Endothelial cell of umbilical vein (primary cell): ENCODE measurements at regions of chr3 and their contacts with region 1.

Region 1: GRCh38 chr3:46423588-46423987 is 16.5 kb downstream of the CCRL2 start:
- DNase-seq: no peak
- H3K4me3 ChIP-seq: no peak overlapping the region
- H3K27ac ChIP-seq: no peak overlapping the region
- H3K4me1 ChIP-seq: no peaks in the 10 kb centered on the region
- H3K27me3 ChIP-seq: peaks cover 0 to 2% of the 10 kb centered on the region in 2 experiments
- CTCF ChIP-seq: no peak
- POLR2A ChIP-seq: no peak

Region 2: DNA sequence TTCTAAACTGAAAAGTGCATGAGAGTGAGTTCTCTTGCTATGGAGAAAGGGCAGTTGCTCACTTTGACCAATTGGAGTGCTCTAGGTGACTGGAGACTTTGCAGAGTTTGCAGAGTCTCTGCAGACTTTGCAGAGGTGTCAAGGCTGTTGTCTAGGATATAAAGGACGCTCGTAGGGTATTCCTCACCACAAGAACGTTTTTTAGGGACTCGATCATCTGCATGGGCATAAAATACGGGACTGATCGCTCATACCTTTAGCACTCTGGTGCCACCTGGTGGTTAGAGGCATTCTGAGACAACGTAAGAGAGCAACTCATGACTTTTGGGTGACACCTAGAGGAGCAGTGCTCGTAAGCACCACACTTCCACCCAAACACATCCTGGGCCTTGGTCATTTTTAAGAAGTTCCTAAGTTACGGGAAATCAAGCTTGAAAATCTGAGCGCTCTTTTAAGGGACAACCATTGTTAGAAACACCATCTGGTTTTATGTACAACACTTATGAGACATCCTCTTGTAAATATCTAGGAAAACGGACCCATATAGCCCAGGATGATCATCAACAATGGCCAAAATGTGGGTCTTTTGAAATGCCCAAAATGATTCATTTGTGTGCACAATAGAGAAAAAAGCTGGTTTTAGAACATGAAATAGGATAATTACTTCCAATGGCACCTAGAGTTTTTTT is 344.7 kb before region 1 on chr3:
- CTCF ChIA-PET with region 1: interaction called, 15 read pairs
- POLR2A ChIA-PET with region 1: no interaction called
- dilution Hi-C with region 1: no loop called
- intact Hi-C with region 1: loop called (anchors 1 kb)
- DNase-seq: peak; percentile 87
- H3K4me3 ChIP-seq: no peak overlapping the region
- H3K27ac ChIP-seq: no peak overlapping the region
- H3K4me1 ChIP-seq: no peaks in the 10 kb centered on the region
- H3K27me3 ChIP-seq: peaks cover 9 to 11% of the 10 kb centered on the region in 2 experiments
- CTCF ChIP-seq: peak; percentile 88 to 98
- POLR2A ChIP-seq: no peak

Region 3: GRCh38 chr3:46276502-46277099 is 147.0 kb before region 1 on chr3:
- CTCF ChIA-PET with region 1: interaction called, 200 read pairs
- POLR2A ChIA-PET with region 1: no interaction called
- dilution Hi-C with region 1: no loop called
- intact Hi-C with region 1: loop called (anchors 1 kb)
- DNase-seq: peak; percentile 48
- H3K4me3 ChIP-seq: no peak overlapping the region
- H3K27ac ChIP-seq: no peak overlapping the region
- H3K4me1 ChIP-seq: no peaks in the 10 kb centered on the region
- H3K27me3 ChIP-seq: no peaks in the 10 kb centered on the region
- CTCF ChIP-seq: peak; percentile 59 to 77
- POLR2A ChIP-seq: no peak

Region 4: GRCh38 chr3:46334741-46335478 is 88.7 kb before region 1 on chr3:
- CTCF ChIA-PET with region 1: no interaction called
- POLR2A ChIA-PET with region 1: no interaction called
- dilution Hi-C with region 1: no loop called
- intact Hi-C with region 1: no loop called
- DNase-seq: no peak
- H3K4me3 ChIP-seq: no peak overlapping the region
- H3K27ac ChIP-seq: no peak overlapping the region
- H3K4me1 ChIP-seq: no peaks in the 10 kb centered on the region
- H3K27me3 ChIP-seq: peaks cover 0 to 1% of the 10 kb centered on the region in 2 experiments
- CTCF ChIP-seq: no peak
- POLR2A ChIP-seq: no peak

Region 5: DNA sequence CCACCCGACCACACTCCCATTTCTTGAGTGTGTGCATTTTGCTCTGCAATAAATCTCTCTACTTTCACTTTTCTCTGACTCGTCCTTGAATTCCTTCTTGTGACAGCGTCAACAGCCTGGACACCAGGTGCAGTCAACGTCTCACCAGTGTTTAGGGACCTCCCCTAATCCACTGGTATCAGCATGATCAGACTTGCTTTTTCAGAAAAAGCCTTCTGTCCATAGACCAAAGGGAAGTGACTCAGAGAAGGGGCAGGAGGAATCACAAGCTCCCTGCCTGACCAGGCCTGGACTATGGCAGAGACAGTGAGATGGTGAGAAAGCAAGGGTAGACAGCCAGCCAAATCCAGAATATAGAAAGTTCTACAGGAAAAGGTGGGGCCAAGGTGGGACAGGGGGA is 37.4 kb before region 1 on chr3:
- CTCF ChIA-PET with region 1: interaction called, 11 read pairs
- POLR2A ChIA-PET with region 1: no interaction called
- dilution Hi-C with region 1: no loop called
- intact Hi-C with region 1: no loop called
- DNase-seq: peak; percentile 75
- H3K4me3 ChIP-seq: no peak overlapping the region
- H3K27ac ChIP-seq: no peak overlapping the region
- H3K4me1 ChIP-seq: no peaks in the 10 kb centered on the region
- H3K27me3 ChIP-seq: peaks cover 3 to 8% of the 10 kb centered on the region in 2 experiments
- CTCF ChIP-seq: no peak
- POLR2A ChIP-seq: no peak

Region 6: GRCh38 chr3:46442576-46443562 is 19.3 kb after region 1 on chr3:
- CTCF ChIA-PET with region 1: interaction called, 11 read pairs
- POLR2A ChIA-PET with region 1: no interaction called
- dilution Hi-C with region 1: no loop called
- intact Hi-C with region 1: no loop called
- DNase-seq: no peak
- H3K4me3 ChIP-seq: no peak overlapping the region
- H3K27ac ChIP-seq: no peak overlapping the region
- H3K4me1 ChIP-seq: no peaks in the 10 kb centered on the region
- H3K27me3 ChIP-seq: no peaks in the 10 kb centered on the region
- CTCF ChIP-seq: peak in 1 of 2 donors; percentile 10
- POLR2A ChIP-seq: no peak